Stomach (tissue), 19 donors: ENCODE measurements at regions of chr1 and their contacts with region 1.

Region 1: GRCh38 chr1:200279810-200280411 is 129.9 kb downstream of the ZNF281 start:
- DNase-seq: peak; percentile 60 to 68
- H3K4me3 ChIP-seq: no peak overlapping the region
- H3K27ac ChIP-seq: no peak overlapping the region
- H3K4me1 ChIP-seq: peaks cover 0 to 10% (median 8%) of the 10 kb centered on the region in 4 donors
- H3K27me3 ChIP-seq: no peaks in the 10 kb centered on the region
- CTCF ChIP-seq: peak in 5 of 7 experiments; percentile 49 to 89 (median 78)
- EP300 ChIP-seq: no peak
- POLR2A ChIP-seq: no peak

Region 2: GRCh38 chr1:200488375-200489165 is 208.7 kb after region 1 on chr1:
- intact Hi-C with region 1: loop called (anchors 5 kb)
- DNase-seq: peak; percentile 51 to 87
- H3K4me3 ChIP-seq: no peak overlapping the region
- H3K27ac ChIP-seq: no peak overlapping the region
- H3K4me1 ChIP-seq: peaks cover 0 to 8% (median 3%) of the 10 kb centered on the region in 4 donors
- H3K27me3 ChIP-seq: peaks cover 0 to 12% (median 0%) of the 10 kb centered on the region in 3 donors
- CTCF ChIP-seq: peak in 6 of 7 experiments; percentile 40 to 89 (median 80)
- EP300 ChIP-seq: no peak
- POLR2A ChIP-seq: no peak